GM12878 (cell line): ENCODE measurements at regions of chr16 and their contacts with region 1.

Region 1: GRCh38 chr16:6081320-6081976 is 983.9 kb upstream of the EEF2KMT start:
- DNase-seq: no peak
- ATAC-seq: no peak
- H3K4me3 ChIP-seq: no peak overlapping the region
- H3K27ac ChIP-seq: no peak overlapping the region
- H3K4me1 ChIP-seq: no peaks in the 10 kb centered on the region
- H3K27me3 ChIP-seq: no peaks in the 10 kb centered on the region
- CTCF ChIP-seq: peak; percentile 41 to 57 (median 44); a peak in 5 of 6 replicates
- EP300 ChIP-seq: no peak
- POLR2A ChIP-seq: no peak
- RAD21 ChIP-seq: peak; percentile 35; the same call in 1 of the 2 replicates

Region 2: DNA sequence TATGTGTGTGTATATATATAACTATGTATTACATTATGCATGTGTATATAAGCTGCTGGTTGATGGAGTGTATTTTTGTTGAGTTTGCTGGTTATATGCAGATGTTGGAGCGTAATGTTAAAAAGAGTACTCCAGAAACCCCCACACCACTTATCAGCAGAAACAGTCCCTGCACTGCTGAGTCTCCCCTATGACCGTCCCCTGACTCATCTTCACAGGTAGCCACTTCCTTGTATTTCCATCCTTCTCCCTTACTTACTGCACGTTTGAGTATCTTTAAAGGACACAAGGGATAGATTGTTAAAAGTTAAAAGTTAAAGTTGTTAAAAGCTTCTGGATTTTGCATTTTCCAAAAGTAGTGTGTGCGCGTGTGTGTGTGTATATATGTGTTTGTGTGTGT is 130.0 kb before region 1 on chr16:
- CTCF ChIA-PET with region 1: no interaction called
- POLR2A ChIA-PET with region 1: no interaction called
- RAD21 ChIA-PET with region 1: no interaction called
- SMC1A ChIA-PET with region 1: no interaction called
- in situ Hi-C with region 1: no loop called
- intact Hi-C with region 1: no loop called
- DNase-seq: no peak
- ATAC-seq: no peak
- H3K4me3 ChIP-seq: no peak overlapping the region
- H3K27ac ChIP-seq: no peak overlapping the region
- H3K4me1 ChIP-seq: no peaks in the 10 kb centered on the region
- H3K27me3 ChIP-seq: no peaks in the 10 kb centered on the region
- CTCF ChIP-seq: no peak
- EP300 ChIP-seq: no peak
- POLR2A ChIP-seq: no peak
- RAD21 ChIP-seq: no peak

Region 3: DNA sequence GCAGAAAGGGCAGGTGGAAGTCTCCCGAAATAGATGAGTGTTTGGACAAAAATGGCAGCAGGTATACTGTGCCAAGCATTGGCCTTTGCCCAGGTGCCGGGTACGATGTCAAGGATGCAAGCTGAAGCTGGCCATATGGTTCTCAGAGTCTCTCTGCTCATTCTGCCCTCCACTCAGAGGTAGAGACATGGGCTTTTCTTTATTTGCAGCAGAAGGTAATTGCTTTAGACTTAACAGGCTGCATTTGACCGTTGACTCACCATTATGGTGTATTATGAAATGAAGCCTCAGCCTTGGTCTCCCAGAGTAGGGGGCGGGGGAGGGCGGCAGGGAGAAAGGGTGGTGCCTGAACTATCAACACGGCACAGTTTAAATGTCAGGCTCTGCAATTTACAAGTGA is 14.8 kb before region 1 on chr16:
- CTCF ChIA-PET with region 1: interaction called, 14 read pairs
- POLR2A ChIA-PET with region 1: no interaction called
- RAD21 ChIA-PET with region 1: no interaction called
- SMC1A ChIA-PET with region 1: no interaction called
- in situ Hi-C with region 1: no loop called
- intact Hi-C with region 1: no loop called
- DNase-seq: no peak
- ATAC-seq: no peak
- H3K4me3 ChIP-seq: no peak overlapping the region
- H3K27ac ChIP-seq: no peak overlapping the region
- H3K4me1 ChIP-seq: no peaks in the 10 kb centered on the region
- H3K27me3 ChIP-seq: no peaks in the 10 kb centered on the region
- CTCF ChIP-seq: no peak
- EP300 ChIP-seq: no peak
- POLR2A ChIP-seq: no peak
- RAD21 ChIP-seq: no peak